Transverse colon (tissue), 4 donors: ENCODE measurements at regions of chr6 and their contacts with region 1.

Region 1: DNA sequence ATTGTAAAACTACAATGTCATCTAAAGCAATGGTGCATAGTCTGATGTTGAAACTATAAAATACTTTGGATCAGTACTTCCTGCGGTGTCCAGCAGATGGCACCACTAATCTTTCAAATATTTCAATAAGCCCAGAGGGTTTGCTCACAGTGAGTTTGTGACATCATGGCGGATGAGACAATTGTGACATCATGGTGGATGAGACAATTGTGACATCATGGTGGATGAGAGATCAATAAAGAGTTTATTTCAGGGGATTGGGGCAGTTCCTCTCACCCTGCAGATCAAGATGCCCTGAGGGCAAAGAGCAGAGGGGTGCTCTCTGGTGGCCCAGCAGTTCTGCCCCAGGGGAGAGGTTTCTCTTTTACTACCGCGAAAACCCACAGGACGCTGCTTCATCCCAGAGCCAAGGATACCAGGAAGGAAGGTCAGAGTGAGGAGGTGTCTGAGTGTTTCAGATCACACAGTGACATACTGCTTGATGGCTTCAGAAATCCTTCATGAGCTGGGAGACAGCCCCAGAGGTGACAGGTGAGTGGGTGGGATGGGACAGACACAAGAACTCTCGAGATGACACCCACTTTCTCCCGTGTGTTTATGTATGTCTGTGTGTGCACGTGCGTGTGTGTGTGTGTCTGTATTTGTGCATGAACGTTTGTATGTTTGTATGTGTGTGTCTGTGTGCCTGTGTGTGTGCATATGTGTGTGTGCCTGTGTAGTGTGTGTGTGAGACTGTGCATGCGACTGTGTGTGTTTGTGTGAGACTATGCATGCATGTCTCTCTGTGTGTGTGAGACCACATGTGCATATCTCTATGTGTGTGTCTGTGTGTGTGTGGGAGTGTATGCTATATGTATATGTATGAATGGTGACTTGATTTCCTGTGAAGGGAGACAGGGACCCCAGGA is 7.3 kb upstream of the ULBP2 start:
- DNase-seq: peak; percentile 75
- H3K4me3 ChIP-seq: no peak overlapping the region
- H3K27ac ChIP-seq: no peak overlapping the region
- H3K4me1 ChIP-seq: peaks cover 5 to 12% (median 10%) of the 10 kb centered on the region in 4 donors
- H3K27me3 ChIP-seq: peaks cover 95% of the 10 kb centered on the region
- CTCF ChIP-seq: peak; percentile 68 to 84 (median 81)
- EP300 ChIP-seq: no peak
- POLR2A ChIP-seq: no peak

Region 2: DNA sequence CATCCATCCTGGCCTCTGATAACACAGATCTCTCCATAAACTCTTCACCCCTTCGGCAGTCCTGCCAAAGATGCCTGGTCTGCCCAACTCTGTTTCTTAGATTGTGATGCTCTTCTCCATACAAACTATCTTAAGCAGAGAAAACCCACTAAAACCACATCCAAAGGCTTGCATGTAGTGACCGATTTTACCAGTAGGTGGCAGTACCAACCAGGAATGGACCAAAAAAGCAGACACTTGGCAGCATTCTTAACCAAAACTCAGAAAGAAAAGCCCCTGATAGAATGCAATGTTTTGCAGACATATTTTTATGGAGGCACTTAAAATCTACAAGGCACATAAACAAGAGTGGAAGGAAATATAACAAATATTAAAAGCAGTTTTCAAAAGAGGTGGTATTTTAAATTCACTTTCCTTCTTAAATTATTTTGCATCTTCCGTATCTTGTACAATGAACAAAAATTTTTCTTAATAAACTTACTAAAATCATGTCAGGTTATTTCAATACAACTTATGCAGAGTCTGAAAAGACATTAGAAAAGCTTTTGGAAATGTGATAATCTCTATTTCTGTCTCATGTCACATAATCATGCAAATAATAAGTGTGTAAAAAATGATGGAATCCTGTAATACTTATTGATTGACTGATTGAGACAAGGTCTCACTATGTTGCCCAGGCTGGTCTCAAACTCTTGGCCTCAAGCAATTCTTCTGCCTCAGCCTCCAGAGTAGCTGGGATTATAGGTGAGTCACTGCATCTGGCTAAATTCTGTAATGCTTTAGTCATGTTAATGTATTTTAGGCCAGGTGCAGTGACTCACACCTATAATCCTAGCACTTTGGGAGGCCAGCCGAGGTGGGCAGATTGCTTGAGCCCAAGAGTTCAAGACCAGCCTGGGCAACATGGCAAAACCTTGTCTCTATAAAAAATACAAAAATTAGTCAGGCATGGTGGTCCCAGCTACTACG is 99.7 kb before region 1 on chr6:
- in situ Hi-C with region 1: loop called in 1 of 4 experiments (anchors 5 kb)
- intact Hi-C with region 1: no loop called
- DNase-seq: peak; percentile 67
- H3K4me3 ChIP-seq: no peak overlapping the region
- H3K27ac ChIP-seq: no peak overlapping the region
- H3K4me1 ChIP-seq: peaks cover 0 to 4% (median 1%) of the 10 kb centered on the region in 4 donors
- H3K27me3 ChIP-seq: no peaks in the 10 kb centered on the region
- CTCF ChIP-seq: peak; percentile 89 to 95 (median 92)
- EP300 ChIP-seq: no peak
- POLR2A ChIP-seq: no peak

Region 3: GRCh38 chr6:150016324-150017185 is 82.1 kb after region 1 on chr6:
- in situ Hi-C with region 1: loop called in 2 of 4 experiments (anchors 5 to 10 kb)
- intact Hi-C with region 1: loop called (anchors 2 kb)
- DNase-seq: peak; percentile 35
- H3K4me3 ChIP-seq: no peak overlapping the region
- H3K27ac ChIP-seq: no peak overlapping the region
- H3K4me1 ChIP-seq: no peaks in the 10 kb centered on the region
- H3K27me3 ChIP-seq: peaks cover 72% of the 10 kb centered on the region
- CTCF ChIP-seq: peak; percentile 67 to 80 (median 74)
- EP300 ChIP-seq: no peak
- POLR2A ChIP-seq: no peak

Region 4: GRCh38 chr6:150025201-150025917 is 90.9 kb after region 1 on chr6 and contains the start of gene RAET1L:
- in situ Hi-C with region 1: loop called in 1 of 4 experiments (anchors 5 kb)
- intact Hi-C with region 1: no loop called
- DNase-seq: peak; percentile 65
- H3K4me3 ChIP-seq: peak within 1 kb of the TSS in 3 of 4 donors; percentile 1 to 32 (median 22)
- H3K27ac ChIP-seq: no peak within 1 kb of the TSS
- H3K4me1 ChIP-seq: peaks cover 11 to 16% (median 13%) of the 10 kb centered on the region in 4 donors
- H3K27me3 ChIP-seq: peaks cover 46% of the 10 kb centered on the region
- CTCF ChIP-seq: no peak
- EP300 ChIP-seq: no peak
- POLR2A ChIP-seq: no peak
- total RNA-seq, gene RAET1L: not detected

Region 5: DNA sequence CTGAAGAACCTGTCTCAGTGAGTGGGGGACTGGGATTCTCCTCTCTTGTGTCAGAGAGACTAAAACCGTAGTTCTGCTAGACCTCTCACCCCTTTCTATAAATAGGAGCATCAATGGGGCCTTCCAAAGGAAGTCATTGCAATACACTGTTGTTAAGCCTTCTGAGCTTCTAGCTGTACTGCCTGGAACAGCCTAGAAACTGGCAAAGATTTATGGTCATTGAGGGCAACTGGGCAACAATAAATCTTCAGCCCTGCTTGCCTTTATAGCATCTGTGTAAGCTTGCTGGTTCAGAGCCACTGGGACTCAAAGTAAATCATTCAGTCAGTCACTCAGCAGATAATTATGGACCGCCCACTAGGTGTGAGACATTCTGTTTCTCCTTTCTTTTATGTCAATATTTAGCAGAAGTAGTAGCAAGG is 261.5 kb after region 1 on chr6:
- in situ Hi-C with region 1: no loop called
- intact Hi-C with region 1: no loop called
- DNase-seq: peak; percentile 47
- H3K4me3 ChIP-seq: no peak overlapping the region
- H3K27ac ChIP-seq: peak overlapping the region; percentile 68 to 76 (median 72)
- H3K4me1 ChIP-seq: peaks cover 19 to 36% (median 27%) of the 10 kb centered on the region in 4 donors
- H3K27me3 ChIP-seq: no peaks in the 10 kb centered on the region
- CTCF ChIP-seq: no peak
- EP300 ChIP-seq: no peak
- POLR2A ChIP-seq: no peak